ENCODE measurements at regions of chr12 and their contacts with region 1.

Region 1: GRCh38 chr12:105053116-105053572 is 31.1 kb downstream of the ALDH1L2 start:
- DNase-seq: peak; percentile 57
- CTCF ChIP-seq: peak; percentile 94

Region 2: DNA sequence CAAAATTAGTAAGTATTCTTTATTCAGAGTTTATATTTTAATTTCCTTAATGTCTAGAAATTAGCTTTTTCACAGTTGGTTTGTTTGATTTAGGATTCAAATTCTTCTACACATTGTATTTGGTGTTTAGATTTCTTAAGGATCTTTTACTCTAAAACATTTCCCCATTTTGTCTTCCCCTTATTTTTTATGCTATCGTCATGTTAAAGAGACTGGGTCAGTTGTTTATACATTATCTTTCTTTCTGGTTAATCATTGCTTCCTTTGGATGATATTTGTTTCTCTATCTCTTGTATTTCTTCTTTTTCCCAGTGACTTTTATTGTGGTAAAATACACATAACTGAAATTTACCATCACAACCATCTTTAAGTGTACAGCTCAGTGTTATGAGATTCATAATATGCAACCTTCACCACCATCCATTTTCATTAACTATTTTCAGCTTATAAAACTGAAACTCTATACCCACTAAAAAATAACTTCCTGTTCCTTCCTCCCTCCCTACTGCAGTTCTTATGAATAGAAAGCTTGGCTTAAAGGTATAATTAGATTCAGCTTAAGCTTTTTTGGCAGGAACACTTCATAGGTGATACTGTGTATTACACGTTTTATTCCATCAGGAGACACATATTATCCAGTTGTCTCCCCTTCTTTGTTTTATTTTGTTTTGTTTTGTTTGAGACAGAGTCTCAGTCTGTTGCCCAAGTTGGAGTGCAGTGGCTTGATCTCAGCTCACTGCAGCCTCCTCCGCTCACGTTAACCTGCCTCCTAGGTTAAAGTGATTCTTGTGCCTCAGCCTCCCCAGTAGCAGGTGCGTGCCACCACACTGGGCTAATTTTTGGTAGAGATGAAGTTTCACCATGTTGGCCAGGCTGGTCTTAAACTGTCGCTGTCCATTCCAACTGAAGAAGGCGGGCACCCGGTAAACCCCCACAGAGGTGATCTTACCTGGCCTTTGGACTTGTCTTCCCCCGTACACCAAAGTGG is 22.0 kb before region 1 on chr12:
- CTCF ChIA-PET with region 1: interaction called, 16 read pairs
- POLR2A ChIA-PET with region 1: no interaction called
- DNase-seq: peak; percentile 18
- CTCF ChIP-seq: no peak

Measured in GM10248 (cell line).